H1 (cell line): ENCODE measurements at regions of chr16 and their contacts with region 1.

Region 1: DNA sequence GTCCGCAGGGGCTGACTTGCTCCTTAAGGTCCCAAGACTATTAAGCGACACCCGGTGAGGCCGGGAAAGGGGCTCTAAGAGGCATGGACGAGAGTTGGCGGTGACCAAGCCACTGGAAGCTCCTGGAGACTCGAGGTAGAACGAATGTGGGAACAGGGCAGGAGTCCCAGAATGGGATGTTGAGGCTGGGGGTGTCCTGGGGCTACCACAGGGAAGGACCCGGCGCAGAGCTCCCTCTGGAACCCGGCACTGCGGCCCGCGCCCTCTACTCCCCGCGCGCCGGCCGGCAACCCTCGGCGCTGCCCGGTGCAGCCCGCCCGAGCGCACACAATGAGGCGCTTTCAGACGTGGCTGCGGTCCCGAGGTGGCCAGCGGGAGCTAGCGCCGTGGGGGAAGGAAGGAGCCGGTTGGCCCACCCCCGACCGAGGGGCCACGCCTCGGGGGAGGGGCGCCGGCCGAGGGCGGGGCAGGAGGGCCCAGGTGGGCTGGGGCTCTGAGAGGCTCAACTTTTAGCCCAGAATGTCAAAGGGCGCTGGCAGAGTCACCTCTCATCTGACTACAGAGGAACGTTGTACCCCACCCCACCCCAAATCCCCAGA is at the start of gene CHST6:
- DNase-seq: peak in 1 of 2 experiments; percentile 91
- H3K4me3 ChIP-seq: peak within 1 kb of the TSS; percentile 66 to 87 (median 78)
- H3K27ac ChIP-seq: peak within 1 kb of the TSS; percentile 25; the same call in 1 of the 2 replicates
- H3K4me1 ChIP-seq: peaks cover 0 to 6% (median under 1%) of the 10 kb centered on the region in 4 experiments; a peak in 3 of 7 replicates
- H3K27me3 ChIP-seq: 0 out of 7 replicates have a peak, but pooled peaks cover 0 to 2% (median 0%) of the 10 kb centered on the region in 4 experiments
- CTCF ChIP-seq: no peak
- EP300 ChIP-seq: no peak
- POLR2A ChIP-seq: peak; percentile 87 to 91
- RAD21 ChIP-seq: no peak; a peak in 1 of 4 replicates
- total RNA-seq, gene CHST6: 25.4 and 26.4 TPM in 2 replicates

Region 2: GRCh38 chr16:75471723-75472633 is 23.2 kb before region 1 on chr16:
- CTCF ChIA-PET with region 1: interaction called, 127 read pairs
- POLR2A ChIA-PET with region 1: interaction called, 18 read pairs
- DNase-seq: no peak
- H3K4me3 ChIP-seq: peak overlapping the region in 1 of 4 experiments; percentile 44; a peak in 1 of 8 replicates
- H3K27ac ChIP-seq: peak overlapping the region; percentile 56; the same call in 1 of the 2 replicates
- H3K4me1 ChIP-seq: peaks cover 1 to 6% (median 5%) of the 10 kb centered on the region in 4 experiments; a peak in 6 of 7 replicates
- H3K27me3 ChIP-seq: no peaks in the 10 kb centered on the region
- CTCF ChIP-seq: peak; percentile 70 to 83 (median 72)
- EP300 ChIP-seq: no peak
- POLR2A ChIP-seq: no peak
- RAD21 ChIP-seq: peak; percentile 71 to 78

Region 3: GRCh38 chr16:75478074-75478473 is 17.1 kb before region 1 on chr16:
- CTCF ChIA-PET with region 1: interaction called, 127 read pairs
- POLR2A ChIA-PET with region 1: interaction called, 18 read pairs
- DNase-seq: no peak
- H3K4me3 ChIP-seq: no peak overlapping the region
- H3K27ac ChIP-seq: no peak overlapping the region
- H3K4me1 ChIP-seq: no peaks in the 10 kb centered on the region
- H3K27me3 ChIP-seq: no peaks in the 10 kb centered on the region
- CTCF ChIP-seq: no peak
- EP300 ChIP-seq: no peak
- POLR2A ChIP-seq: no peak
- RAD21 ChIP-seq: no peak

Region 4: GRCh38 chr16:75506567-75506966 is 11.4 kb after region 1 on chr16:
- CTCF ChIA-PET with region 1: interaction called, 40 read pairs
- POLR2A ChIA-PET with region 1: interaction called, 73 read pairs
- DNase-seq: no peak
- H3K4me3 ChIP-seq: no peak overlapping the region
- H3K27ac ChIP-seq: no peak overlapping the region
- H3K4me1 ChIP-seq: no peaks in the 10 kb centered on the region
- H3K27me3 ChIP-seq: no peaks in the 10 kb centered on the region; a peak in 1 of 7 replicates
- CTCF ChIP-seq: no peak
- EP300 ChIP-seq: no peak
- POLR2A ChIP-seq: no peak
- RAD21 ChIP-seq: no peak

Region 5: DNA sequence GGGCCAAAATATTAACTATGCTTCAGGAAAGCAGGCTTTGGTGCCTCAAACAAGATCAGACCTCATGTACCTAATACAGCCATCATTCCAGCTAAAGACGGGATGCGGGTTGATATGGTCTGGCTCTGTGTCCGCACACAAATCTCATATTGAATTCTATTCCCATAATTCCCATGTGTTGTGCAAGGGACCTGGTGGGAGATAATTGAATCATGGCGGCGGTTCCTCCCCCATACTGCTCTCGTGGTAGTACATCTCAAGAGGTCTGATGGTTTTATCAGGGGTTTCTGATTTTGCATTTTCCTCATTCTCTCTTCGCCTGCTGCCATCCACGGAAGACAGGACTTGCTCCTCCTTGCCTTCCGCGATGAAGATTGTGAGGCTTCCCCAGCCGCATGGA is 19.1 kb after region 1 on chr16:
- CTCF ChIA-PET with region 1: interaction called, 56 read pairs
- POLR2A ChIA-PET with region 1: interaction called, 73 read pairs
- DNase-seq: no peak
- H3K4me3 ChIP-seq: no peak overlapping the region
- H3K27ac ChIP-seq: no peak overlapping the region
- H3K4me1 ChIP-seq: peaks cover 0 to 6% (median 2%) of the 10 kb centered on the region in 4 experiments; a peak in 3 of 7 replicates
- H3K27me3 ChIP-seq: no peaks in the 10 kb centered on the region; a peak in 1 of 7 replicates
- CTCF ChIP-seq: no peak
- EP300 ChIP-seq: no peak
- POLR2A ChIP-seq: no peak
- RAD21 ChIP-seq: no peak